ENCODE measurements at regions of chr15 and their contacts with region 1.

Region 1: DNA sequence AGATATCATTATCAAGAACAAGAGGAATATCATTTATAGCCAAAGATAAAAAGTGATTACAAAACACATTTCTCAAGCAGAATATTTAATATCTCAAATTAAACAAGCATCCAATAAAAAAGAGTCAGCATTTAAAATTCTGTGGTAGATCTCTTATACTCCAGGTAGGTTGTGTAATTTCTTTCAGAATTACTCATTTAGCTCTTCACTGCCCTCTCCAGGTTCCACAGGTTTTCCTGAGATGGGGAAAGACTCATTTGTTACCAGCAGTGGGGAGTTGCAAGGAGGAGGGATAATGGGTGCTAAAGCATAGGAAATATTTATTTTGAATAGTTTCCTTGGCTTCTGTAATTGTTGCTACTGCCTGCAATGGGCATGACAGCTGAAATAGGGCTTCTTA is 83.1 kb upstream of the RASGRP1 start:
- DNase-seq: peak; percentile 58
- H3K4me3 Mint-ChIP-seq: no peak overlapping the region
- H3K27ac Mint-ChIP-seq: no peak overlapping the region
- H3K4me1 Mint-ChIP-seq: no peaks in the 10 kb centered on the region
- H3K27me3 Mint-ChIP-seq: no peaks in the 10 kb centered on the region
- CTCF ChIP-seq: peak; percentile 61

Region 2: DNA sequence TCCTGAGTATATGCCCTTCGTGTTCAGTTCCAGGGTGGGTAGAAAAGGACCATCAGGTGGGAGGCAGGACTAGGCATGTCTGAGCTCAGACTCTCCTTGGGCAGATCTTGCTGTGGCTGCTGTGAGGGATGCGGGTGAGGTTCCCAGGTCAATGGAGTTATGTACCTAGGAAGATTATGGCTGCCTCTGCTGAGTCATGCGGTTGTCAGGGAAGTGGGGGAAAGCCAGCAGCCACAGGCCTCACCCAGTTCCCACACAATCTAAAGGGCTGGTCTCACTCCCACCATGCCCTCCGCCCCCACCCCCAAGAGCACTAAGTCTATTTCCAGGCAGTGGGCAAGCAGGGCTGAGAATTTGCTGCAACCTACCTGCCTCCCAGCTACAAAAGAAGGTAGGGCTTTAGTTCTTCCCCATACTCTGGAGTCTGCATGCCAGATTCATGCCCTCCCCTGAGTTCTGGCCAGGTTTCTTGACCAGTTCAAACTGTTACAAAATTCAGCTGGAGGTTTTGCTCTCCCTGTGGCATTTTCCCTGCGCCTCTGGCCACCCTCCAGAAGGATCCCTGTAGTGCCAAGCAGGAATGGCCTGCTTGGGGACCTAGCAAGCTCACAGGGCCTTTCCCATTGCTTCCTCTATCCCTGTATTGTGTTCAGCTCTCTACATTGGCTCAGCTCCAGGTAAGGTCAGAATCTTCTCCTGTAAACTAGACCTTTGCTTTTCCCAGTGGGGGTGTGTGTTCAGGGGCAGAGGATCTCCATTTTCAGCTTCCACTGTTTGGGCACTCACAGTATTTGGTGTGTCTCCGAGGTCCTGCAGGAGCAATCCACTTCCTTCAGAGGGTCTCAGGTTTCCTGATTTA is 725.9 kb before region 1 on chr15:
- CTCF ChIA-PET with region 1: no interaction called
- POLR2A ChIA-PET with region 1: no interaction called
- intact Hi-C with region 1: no loop called
- DNase-seq: peak; percentile 35
- H3K4me3 Mint-ChIP-seq: no peak overlapping the region
- H3K27ac Mint-ChIP-seq: no peak overlapping the region
- H3K4me1 Mint-ChIP-seq: no peaks in the 10 kb centered on the region
- H3K27me3 Mint-ChIP-seq: peaks cover 33% of the 10 kb centered on the region
- CTCF ChIP-seq: no peak

Region 3: GRCh38 chr15:38597219-38597800 is 50.4 kb before region 1 on chr15:
- CTCF ChIA-PET with region 1: no interaction called
- POLR2A ChIA-PET with region 1: no interaction called
- intact Hi-C with region 1: no loop called
- DNase-seq: no peak
- H3K4me3 Mint-ChIP-seq: no peak overlapping the region
- H3K27ac Mint-ChIP-seq: no peak overlapping the region
- H3K4me1 Mint-ChIP-seq: peaks cover 9% of the 10 kb centered on the region
- H3K27me3 Mint-ChIP-seq: no peaks in the 10 kb centered on the region
- CTCF ChIP-seq: no peak

Region 4: DNA sequence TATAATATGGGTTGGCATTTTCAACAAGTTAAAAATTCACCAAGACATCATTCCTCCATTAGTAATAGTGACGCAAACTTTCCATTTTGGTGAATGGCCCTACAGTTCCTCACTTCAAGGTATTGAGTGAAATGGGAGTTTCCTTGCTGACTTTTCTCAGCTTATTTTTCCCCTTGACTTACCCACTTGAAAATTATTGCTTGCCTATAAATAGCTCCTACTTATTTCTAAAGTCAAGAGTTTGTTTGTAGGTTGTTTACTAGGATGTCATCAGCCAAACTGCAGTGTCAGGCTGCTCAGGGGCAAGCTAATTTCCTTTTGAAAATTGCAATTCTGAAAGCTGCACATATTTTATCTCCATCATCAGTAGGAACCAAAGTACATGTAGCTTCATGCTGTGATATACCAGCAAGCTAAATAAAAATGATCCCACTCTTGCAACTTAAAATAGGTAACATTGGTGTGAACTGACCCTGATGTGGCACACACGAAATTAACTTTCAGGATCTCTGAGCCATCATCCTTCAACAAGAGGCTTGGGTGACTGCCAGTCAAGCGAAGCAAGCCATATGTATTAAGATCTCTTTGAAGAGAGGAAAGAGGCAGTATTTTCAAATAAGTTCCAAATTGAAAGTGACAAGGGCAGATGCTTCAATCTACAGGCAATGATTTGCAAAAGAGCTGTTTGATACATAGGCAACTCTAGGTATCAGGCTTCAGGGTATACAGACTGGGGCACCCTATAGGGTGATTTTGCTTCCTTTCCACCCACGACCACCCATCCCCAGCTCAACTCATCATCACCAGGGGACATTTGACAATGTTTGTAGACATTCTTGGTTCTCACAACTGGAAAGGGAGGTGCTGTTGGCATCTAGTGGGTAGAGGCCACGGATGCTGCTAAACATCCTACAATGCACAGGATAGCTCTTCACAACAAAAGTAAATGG is 16.3 kb before region 1 on chr15:
- CTCF ChIA-PET with region 1: interaction called, 14 read pairs
- POLR2A ChIA-PET with region 1: interaction called, 4 read pairs
- intact Hi-C with region 1: no loop called
- DNase-seq: no peak
- H3K4me3 Mint-ChIP-seq: no peak overlapping the region
- H3K27ac Mint-ChIP-seq: no peak overlapping the region
- H3K4me1 Mint-ChIP-seq: no peaks in the 10 kb centered on the region
- H3K27me3 Mint-ChIP-seq: peaks cover 31% of the 10 kb centered on the region
- CTCF ChIP-seq: no peak

Region 5: GRCh38 chr15:38660738-38661137 is 13.1 kb after region 1 on chr15:
- CTCF ChIA-PET with region 1: interaction called, 27 read pairs
- POLR2A ChIA-PET with region 1: no interaction called
- intact Hi-C with region 1: no loop called
- DNase-seq: no peak
- H3K4me3 Mint-ChIP-seq: no peak overlapping the region
- H3K27ac Mint-ChIP-seq: no peak overlapping the region
- H3K4me1 Mint-ChIP-seq: no peaks in the 10 kb centered on the region
- H3K27me3 Mint-ChIP-seq: peaks cover 16% of the 10 kb centered on the region
- CTCF ChIP-seq: no peak